Caco-2 (cell line): ENCODE measurements at regions of chr2 and their contacts with region 1.

Region 1: GRCh38 chr2:100242891-100243619 is 79.2 kb downstream of the LONRF2 start:
- DNase-seq: peak; percentile 63 to 71
- H3K4me3 ChIP-seq: no peak overlapping the region
- H3K4me3 Mint-ChIP-seq: no peak overlapping the region
- H3K27ac Mint-ChIP-seq: no peak overlapping the region
- H3K4me1 ChIP-seq: no peaks in the 10 kb centered on the region
- H3K4me1 Mint-ChIP-seq: no peaks in the 10 kb centered on the region
- H3K27me3 ChIP-seq: no peaks in the 10 kb centered on the region
- H3K27me3 Mint-ChIP-seq: peaks cover 9% of the 10 kb centered on the region
- CTCF ChIP-seq: peak; percentile 60 to 74

Region 2: DNA sequence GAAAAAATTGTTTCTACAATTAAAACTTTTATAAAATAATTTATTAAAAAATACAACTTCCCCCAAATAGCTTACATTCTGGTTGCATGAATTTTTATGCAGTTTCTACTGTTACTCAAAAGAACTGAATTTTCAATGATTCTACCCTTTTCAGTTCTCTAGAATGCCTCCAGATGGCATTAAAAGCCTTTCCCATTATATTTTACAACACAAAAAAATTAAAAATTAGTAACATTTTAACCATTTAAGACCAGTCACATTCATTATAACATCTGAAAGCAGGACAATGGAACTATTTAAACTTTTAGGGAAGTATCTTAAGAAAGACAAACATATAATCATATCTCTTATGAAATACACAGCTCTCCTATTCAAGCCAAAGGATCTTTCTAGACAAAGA is 517.2 kb before region 1 on chr2:
- CTCF ChIA-PET with region 1: no interaction called
- POLR2A ChIA-PET with region 1: no interaction called
- intact Hi-C with region 1: loop called (anchors 10 kb)
- DNase-seq: no peak
- H3K4me3 ChIP-seq: no peak overlapping the region
- H3K4me3 Mint-ChIP-seq: no peak overlapping the region
- H3K27ac Mint-ChIP-seq: no peak overlapping the region
- H3K4me1 ChIP-seq: no peaks in the 10 kb centered on the region
- H3K4me1 Mint-ChIP-seq: no peaks in the 10 kb centered on the region
- H3K27me3 ChIP-seq: no peaks in the 10 kb centered on the region
- H3K27me3 Mint-ChIP-seq: no peaks in the 10 kb centered on the region
- CTCF ChIP-seq: peak in 1 of 2 experiments; percentile 21

Region 3: GRCh38 chr2:99818842-99819241 is 424.2 kb before region 1 on chr2:
- CTCF ChIA-PET with region 1: no interaction called
- POLR2A ChIA-PET with region 1: no interaction called
- intact Hi-C with region 1: loop called (anchors 1 kb)
- DNase-seq: no peak
- H3K4me3 ChIP-seq: no peak overlapping the region
- H3K4me3 Mint-ChIP-seq: no peak overlapping the region
- H3K27ac Mint-ChIP-seq: no peak overlapping the region
- H3K4me1 ChIP-seq: no peaks in the 10 kb centered on the region
- H3K4me1 Mint-ChIP-seq: no peaks in the 10 kb centered on the region
- H3K27me3 ChIP-seq: no peaks in the 10 kb centered on the region
- H3K27me3 Mint-ChIP-seq: peaks cover 21% of the 10 kb centered on the region
- CTCF ChIP-seq: peak in 1 of 2 experiments; percentile 5

Region 4: DNA sequence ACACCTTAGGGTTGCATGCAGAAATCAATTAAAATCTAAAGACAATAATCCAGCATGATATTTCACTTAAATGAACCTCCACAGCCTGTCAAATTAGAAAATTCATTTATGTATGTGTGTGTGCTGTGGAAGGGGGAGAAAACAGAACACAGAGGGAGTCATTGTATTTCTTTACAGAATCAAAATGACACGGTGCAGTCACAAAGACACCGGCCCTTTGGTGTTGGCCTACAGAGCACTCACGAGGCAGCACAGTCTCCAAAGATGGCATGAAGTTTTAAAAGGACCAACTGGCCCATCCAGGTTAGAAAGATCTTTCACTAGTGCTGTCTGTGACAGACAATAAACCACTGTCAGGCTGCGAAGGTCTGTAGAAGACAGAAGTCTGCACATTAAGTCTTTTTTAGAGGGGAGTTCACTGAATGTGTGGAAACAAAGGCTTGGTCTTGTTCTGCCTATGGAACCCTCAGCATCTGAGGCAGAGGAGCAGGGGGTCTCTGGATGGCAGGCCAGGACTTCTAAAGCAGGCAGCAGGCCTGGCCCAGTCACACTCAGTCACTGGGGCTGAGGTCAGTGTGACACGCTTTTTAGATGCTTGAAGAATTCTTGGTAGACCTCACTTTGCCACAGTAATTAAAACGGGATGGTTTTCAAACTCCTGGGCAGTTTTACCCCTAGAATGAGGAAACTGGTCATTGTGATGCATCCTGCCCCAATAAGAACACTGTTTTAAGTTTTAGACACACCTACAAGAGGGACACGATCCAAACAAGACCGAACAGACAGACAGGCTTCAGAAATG is 285.5 kb before region 1 on chr2:
- CTCF ChIA-PET with region 1: no interaction called
- POLR2A ChIA-PET with region 1: no interaction called
- intact Hi-C with region 1: no loop called
- DNase-seq: no peak
- H3K4me3 ChIP-seq: no peak overlapping the region
- H3K4me3 Mint-ChIP-seq: no peak overlapping the region
- H3K27ac Mint-ChIP-seq: no peak overlapping the region
- H3K4me1 ChIP-seq: no peaks in the 10 kb centered on the region
- H3K4me1 Mint-ChIP-seq: no peaks in the 10 kb centered on the region
- H3K27me3 ChIP-seq: no peaks in the 10 kb centered on the region
- H3K27me3 Mint-ChIP-seq: peaks cover 9% of the 10 kb centered on the region
- CTCF ChIP-seq: no peak

Region 5: DNA sequence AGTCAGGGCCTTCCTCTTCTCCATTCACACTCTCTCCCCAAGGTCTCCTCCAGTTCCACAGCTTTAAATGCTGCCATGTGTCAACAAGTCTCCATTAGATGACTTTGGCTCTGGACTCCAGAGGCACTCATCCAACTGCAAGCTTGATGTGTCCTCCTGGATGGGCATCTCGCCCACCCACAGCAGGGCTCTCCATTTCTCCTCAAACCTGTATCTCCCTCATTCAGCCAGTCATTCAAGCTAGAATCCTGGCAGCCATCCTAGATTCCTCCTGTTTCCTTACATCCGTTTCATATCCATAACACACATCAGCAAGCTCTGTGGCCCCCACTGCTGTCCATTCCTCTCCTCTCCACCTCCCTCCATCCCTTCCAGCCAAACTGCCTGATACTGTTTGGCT is 12.3 kb before region 1 on chr2:
- CTCF ChIA-PET with region 1: no interaction called
- POLR2A ChIA-PET with region 1: no interaction called
- intact Hi-C with region 1: no loop called
- DNase-seq: no peak
- H3K4me3 ChIP-seq: no peak overlapping the region
- H3K4me3 Mint-ChIP-seq: no peak overlapping the region
- H3K27ac Mint-ChIP-seq: no peak overlapping the region
- H3K4me1 ChIP-seq: no peaks in the 10 kb centered on the region
- H3K4me1 Mint-ChIP-seq: no peaks in the 10 kb centered on the region
- H3K27me3 ChIP-seq: no peaks in the 10 kb centered on the region
- H3K27me3 Mint-ChIP-seq: peaks cover 25% of the 10 kb centered on the region
- CTCF ChIP-seq: no peak